GM10248 (cell line): ENCODE measurements at regions of chr10 and their contacts with region 1.

Region 1: GRCh38 chr10:77458986-77459590 is 178.5 kb downstream of the KCNMA1 start:
- DNase-seq: no peak
- CTCF ChIP-seq: no peak

Region 2: DNA sequence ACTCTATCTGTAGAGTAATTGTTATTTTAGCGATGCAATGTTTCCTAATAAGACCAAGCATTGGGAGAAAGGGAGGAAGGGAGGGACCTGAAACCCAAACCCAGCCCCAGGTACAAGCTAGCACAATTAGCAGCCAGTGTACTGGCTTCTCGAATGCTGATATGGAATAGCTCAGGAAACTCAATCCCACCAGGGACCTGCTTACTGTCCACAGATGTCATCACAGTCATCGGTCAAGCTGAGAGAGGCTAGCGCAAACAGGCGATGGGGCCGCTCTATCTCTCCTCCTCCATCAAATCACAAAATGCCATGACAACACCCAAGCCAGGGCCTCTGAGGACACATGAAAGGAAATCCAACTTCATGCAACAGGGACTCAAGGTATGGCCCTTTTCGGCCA is 13.5 kb before region 1 on chr10:
- CTCF ChIA-PET with region 1: interaction called, 14 read pairs
- POLR2A ChIA-PET with region 1: no interaction called
- DNase-seq: no peak
- CTCF ChIP-seq: no peak